Activated CD4-positive, alpha-beta T cell treated with anti-CD3 and anti-CD28 coated beads for 36 hours (primary cell): ENCODE measurements at regions of chr16 and their contacts with region 1.

Region 1: DNA sequence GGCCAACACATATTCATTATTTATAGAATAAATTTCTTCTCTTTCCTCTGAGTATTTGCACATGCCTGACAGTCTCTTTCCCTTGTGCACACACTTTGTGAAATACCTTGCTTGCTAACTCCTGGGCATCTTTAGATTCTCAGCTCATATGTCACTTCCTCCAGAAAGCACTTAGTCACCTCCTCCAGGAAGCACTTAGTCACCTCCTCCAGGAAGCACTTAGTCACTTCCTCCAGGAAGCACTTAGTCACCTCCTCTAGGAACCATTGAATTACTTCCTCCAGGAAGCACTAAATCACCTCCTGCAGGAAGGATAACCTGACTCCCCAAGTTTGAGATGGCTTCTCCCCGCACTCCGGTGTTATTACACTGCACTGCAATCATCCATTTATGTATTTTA is 462.5 kb upstream of the EEF2KMT start:
- DNase-seq: peak; percentile 16
- ATAC-seq: no peak
- H3K4me3 Mint-ChIP-seq: no peak overlapping the region
- H3K27ac Mint-ChIP-seq: no peak overlapping the region
- H3K4me1 Mint-ChIP-seq: no peaks in the 10 kb centered on the region
- H3K27me3 Mint-ChIP-seq: no peaks in the 10 kb centered on the region

Region 2: GRCh38 chr16:5621826-5622225 is 61.7 kb after region 1 on chr16:
- CTCF ChIA-PET with region 1: no interaction called
- POLR2A ChIA-PET with region 1: no interaction called
- intact Hi-C with region 1: loop called in 1 of 2 experiments (anchors 10 kb)
- DNase-seq: no peak
- ATAC-seq: no peak
- H3K4me3 Mint-ChIP-seq: no peak overlapping the region
- H3K27ac Mint-ChIP-seq: no peak overlapping the region
- H3K4me1 Mint-ChIP-seq: no peaks in the 10 kb centered on the region
- H3K27me3 Mint-ChIP-seq: peaks cover 9% of the 10 kb centered on the region